ENCODE measurements at regions of chr2 and their contacts with region 1.

Region 1: DNA sequence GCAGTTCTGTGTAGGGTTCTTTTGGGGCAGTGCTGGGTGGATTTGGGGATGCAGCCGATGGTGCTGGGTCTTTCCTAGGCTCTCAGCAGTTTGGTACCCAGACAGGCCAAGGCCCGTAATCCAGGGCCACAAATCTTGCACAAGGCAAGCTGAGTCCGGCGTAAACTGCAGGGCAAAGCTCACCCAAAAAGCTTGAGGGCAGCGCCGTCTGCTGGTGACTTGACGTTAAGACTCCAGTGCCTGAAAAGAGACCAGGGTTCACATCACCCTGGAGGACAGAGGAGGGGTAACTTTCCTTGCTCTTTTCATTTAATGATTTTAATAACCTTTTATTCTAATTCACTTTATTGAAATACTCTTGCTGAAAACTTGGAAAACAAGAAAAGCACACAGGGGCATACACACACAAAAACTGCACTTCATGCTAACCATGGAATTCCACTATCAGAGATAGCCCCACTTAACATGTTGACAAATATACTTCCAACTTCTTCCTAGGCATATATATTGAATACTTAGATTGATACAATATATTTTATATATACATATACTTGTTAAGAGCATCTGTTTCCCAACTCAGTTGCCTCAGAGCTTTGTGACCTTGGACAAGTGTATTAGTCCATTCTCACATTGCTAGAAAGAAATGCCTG is 38.9 kb downstream of the CNGA3 start:
- DNase-seq: no peak
- H3K4me3 ChIP-seq: no peak overlapping the region
- CTCF ChIP-seq: peak; percentile 97

Region 2: GRCh38 chr2:97707362-97708047 is 677.7 kb before region 1 on chr2:
- CTCF ChIA-PET with region 1: interaction called, 176 read pairs
- POLR2A ChIA-PET with region 1: no interaction called
- DNase-seq: no peak
- H3K4me3 ChIP-seq: no peak overlapping the region
- CTCF ChIP-seq: no peak

Region 3: GRCh38 chr2:98102878-98103277 is 282.3 kb before region 1 on chr2:
- CTCF ChIA-PET with region 1: no interaction called
- POLR2A ChIA-PET with region 1: no interaction called
- DNase-seq: no peak
- H3K4me3 ChIP-seq: no peak overlapping the region
- CTCF ChIP-seq: no peak

Region 4: GRCh38 chr2:98295721-98296414 is 89.3 kb before region 1 on chr2:
- CTCF ChIA-PET with region 1: interaction called, 18 read pairs
- POLR2A ChIA-PET with region 1: no interaction called
- DNase-seq: no peak
- H3K4me3 ChIP-seq: no peak overlapping the region
- CTCF ChIP-seq: no peak

Region 5: DNA sequence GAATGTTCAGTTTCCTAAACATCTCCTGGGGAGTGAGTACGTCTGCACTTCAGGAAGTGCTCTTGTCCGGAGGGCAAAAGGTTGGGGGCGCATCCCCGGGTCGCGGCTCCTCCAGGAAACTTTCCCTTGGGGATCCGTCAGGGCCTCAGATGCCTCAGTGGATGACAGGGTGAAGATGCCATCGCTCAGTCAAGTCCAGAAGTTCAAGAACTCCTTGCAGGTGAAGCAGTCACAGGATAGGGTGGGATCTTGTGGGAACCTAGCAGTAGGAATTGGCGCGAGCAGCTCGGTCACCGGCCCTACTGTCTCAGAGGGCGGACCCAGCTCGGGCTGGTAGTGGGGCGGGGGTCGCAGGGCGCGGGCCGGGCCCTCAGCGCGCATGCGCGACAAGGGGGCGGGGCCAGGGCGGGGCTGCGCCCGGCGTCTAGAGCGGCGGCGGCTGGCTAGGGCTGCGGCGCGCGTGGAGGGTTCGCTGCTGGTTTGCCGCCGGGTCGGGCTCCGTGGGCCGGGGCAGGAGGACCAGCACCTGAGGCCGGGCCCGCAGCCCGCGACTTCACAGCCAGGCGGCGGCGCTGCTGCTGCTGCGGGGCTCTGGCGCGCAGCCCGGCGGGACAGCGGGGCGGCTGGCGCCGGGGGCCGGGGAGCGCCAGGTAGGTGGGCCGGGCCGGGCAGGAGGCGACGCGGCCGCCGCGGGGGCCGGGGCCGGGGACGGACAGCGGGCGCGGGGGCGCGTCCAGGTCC is 59.4 kb after region 1 on chr2 and contains the start of gene INPP4A:
- CTCF ChIA-PET with region 1: no interaction called
- POLR2A ChIA-PET with region 1: no interaction called
- DNase-seq: no peak
- H3K4me3 ChIP-seq: peak within 1 kb of the TSS; percentile 74
- CTCF ChIP-seq: no peak